Activated CD4-positive, alpha-beta memory T cell treated with anti-CD3 and anti-CD28 coated beads, Interleukin-2, amount 10 ng/mL, durations not matched to agents 7 days and 5 days (primary cell): ENCODE measurements at regions of chr11 and their contacts with region 1.

Region 1: DNA sequence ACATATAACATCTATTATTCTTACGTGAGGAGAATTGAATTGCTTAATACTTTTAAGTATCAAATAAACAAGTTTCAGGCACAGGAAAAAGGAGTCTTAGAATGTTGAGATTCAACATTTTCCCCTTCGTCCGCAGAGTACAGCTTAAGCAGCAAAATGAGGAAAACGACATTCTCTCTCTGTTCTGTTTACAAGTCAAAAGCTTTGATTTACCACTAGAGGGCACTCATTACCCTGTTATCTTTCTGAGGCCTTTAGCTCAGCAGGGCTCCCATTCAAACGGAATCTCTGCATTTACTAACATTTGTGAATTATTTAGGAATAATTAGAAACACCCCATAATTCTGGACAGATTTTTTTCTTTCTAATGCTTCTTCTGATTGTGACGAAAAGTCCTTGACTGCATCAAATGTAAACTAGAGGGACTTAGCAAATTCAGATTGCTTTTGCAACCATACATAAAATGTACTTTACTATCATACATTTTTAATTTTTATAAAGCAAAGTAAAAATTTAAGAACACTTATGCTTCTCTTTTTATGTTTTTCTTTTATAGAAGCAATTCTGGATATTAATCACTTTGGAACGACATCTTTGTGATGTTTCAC is 75.0 kb downstream of the JRKL start:
- DNase-seq: no peak
- H3K4me3 Mint-ChIP-seq: no peak overlapping the region
- H3K27ac Mint-ChIP-seq: no peak overlapping the region
- H3K4me1 Mint-ChIP-seq: peaks cover 1% of the 10 kb centered on the region
- H3K27me3 Mint-ChIP-seq: peaks cover 14% of the 10 kb centered on the region

Region 2: DNA sequence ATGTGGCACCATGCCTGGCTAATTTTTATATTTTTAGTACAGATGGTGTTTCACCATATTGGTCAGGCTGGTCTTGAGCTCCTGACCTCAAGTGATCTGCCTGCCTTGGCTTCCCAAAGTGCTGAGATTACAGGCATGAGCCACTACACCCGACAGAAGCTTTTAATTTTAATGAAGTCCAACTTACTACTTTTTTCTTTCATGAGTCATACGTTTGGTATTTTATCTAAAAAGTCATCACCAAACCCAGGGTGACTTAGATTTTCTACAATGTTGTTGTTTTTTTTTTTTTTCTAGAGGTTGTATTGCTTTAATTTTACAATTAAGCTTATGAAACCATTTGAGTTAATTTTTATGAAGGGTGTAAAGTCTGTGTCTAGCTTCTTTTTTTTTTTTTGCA is 40.1 kb before region 1 on chr11:
- CTCF ChIA-PET with region 1: interaction called, 10 read pairs
- POLR2A ChIA-PET with region 1: no interaction called
- DNase-seq: no peak
- H3K4me3 Mint-ChIP-seq: no peak overlapping the region
- H3K27ac Mint-ChIP-seq: no peak overlapping the region
- H3K4me1 Mint-ChIP-seq: peaks cover 5% of the 10 kb centered on the region
- H3K27me3 Mint-ChIP-seq: peaks cover 30% of the 10 kb centered on the region

Region 3: DNA sequence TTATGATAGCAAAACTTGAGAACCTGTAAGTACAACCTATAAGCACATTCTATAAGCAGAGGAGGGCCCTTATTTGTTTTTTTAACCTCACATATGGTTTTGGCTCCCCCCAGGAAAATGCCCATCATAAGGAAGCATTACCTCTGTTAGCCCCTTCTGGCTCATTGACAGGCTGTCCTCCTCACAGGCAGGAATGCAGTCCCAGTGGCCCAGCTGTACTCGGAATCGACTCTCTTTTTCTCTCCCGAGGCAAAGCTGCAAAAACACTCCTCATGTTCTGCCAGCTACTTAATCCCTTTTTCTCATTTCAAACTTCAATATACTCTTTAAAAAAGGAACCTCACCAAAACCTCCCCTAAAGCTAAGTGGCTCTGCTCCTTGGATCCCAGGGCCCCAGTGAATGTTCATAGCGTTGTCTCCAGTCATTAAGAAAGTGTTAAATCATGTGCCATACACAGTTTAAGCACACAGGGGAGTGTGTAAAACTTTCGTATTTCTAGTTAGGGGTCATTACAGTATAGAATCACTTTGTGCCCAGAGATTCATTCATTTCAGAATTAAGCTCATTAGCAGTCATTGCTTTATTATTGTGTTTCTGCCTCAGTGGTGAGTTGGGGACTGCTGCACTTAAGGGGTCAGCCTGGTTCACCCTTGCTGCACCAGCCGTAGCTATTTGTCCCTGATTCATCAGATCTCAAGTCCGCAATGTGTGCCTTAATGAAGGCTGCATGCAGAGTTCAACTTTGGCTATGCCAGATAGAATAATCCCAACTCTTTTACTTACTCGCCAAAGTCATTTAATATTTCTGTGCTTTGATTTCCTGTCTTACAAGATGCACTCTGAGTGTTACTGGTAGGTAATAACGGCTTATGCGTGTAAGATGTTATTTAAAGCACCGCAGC is 17.3 kb before region 1 on chr11:
- CTCF ChIA-PET with region 1: interaction called, 46 read pairs
- POLR2A ChIA-PET with region 1: no interaction called
- DNase-seq: no peak
- H3K4me3 Mint-ChIP-seq: no peak overlapping the region
- H3K27ac Mint-ChIP-seq: no peak overlapping the region
- H3K4me1 Mint-ChIP-seq: no peaks in the 10 kb centered on the region
- H3K27me3 Mint-ChIP-seq: peaks cover 16% of the 10 kb centered on the region

Region 4: GRCh38 chr11:96481771-96482170 is 17.0 kb after region 1 on chr11:
- CTCF ChIA-PET with region 1: interaction called, 28 read pairs
- POLR2A ChIA-PET with region 1: interaction called, 4 read pairs
- DNase-seq: no peak
- H3K4me3 Mint-ChIP-seq: no peak overlapping the region
- H3K27ac Mint-ChIP-seq: no peak overlapping the region
- H3K4me1 Mint-ChIP-seq: no peaks in the 10 kb centered on the region
- H3K27me3 Mint-ChIP-seq: peaks cover 3% of the 10 kb centered on the region